ENCODE measurements at regions of chr11 and their contacts with region 1.

Region 1: DNA sequence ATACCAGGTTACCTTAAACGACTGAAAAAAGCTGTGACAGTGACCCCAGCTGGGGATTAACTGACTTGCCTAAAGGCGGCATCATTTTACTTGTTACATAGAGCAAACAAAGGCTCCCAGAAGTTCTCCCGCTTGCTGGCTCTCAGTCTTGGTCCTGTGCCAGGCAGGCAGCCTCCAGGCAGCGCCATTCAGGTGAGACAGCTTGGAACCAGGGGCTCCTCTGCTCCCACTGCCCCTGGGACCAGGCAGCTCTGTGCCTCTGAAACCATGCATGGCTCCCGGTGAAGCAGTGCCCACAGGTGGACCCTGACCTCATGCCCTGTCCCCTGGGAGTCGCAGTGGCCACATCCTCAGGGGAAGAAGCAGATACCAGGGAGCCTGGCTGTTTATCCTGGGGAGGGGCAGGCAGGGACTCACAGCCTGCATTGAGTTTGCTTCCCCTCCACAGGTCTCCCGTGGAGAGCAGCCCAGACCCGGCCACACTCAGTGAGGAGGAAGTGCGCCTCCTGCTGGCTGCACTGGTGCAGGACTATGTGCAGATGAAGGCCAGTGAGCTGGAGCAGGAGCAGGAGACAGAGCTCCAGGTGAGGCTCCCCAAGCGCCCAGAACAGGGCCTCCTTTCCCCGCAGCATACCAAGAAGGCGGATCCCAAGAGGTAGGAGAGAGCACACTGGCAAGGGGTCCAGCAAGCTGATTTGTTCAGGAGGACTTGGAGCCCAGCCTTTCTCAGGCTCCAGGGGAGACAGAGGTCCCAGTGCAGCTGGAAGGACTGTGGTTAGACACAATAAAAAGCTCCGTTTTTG is 15.6 kb upstream of the CYP2R1 start:
- DNase-seq: peak; percentile 27
- H3K4me3 ChIP-seq: no peak overlapping the region
- H3K27ac ChIP-seq: no peak overlapping the region
- H3K4me1 ChIP-seq: no peaks in the 10 kb centered on the region
- H3K27me3 ChIP-seq: no peaks in the 10 kb centered on the region
- CTCF ChIP-seq: peak; percentile 61 to 75

Region 2: GRCh38 chr11:14519917-14520746 is 387.5 kb before region 1 on chr11 and contains the start of gene PSMA1:
- CTCF ChIA-PET with region 1: no interaction called
- dilution Hi-C with region 1: no loop called
- in situ Hi-C with region 1: loop called in 1 of 2 experiments (anchors 10 kb)
- intact Hi-C with region 1: no loop called
- DNase-seq: peak; percentile 96
- H3K4me3 ChIP-seq: peak within 1 kb of the TSS; percentile 72 to 98 (median 93)
- H3K27ac ChIP-seq: peak within 1 kb of the TSS; percentile 97
- H3K4me1 ChIP-seq: peaks cover 5% of the 10 kb centered on the region
- H3K27me3 ChIP-seq: no peaks in the 10 kb centered on the region
- CTCF ChIP-seq: peak in 1 of 2 donors; percentile 20
- total RNA-seq, gene PSMA1: 107 to 154 TPM

Region 3: DNA sequence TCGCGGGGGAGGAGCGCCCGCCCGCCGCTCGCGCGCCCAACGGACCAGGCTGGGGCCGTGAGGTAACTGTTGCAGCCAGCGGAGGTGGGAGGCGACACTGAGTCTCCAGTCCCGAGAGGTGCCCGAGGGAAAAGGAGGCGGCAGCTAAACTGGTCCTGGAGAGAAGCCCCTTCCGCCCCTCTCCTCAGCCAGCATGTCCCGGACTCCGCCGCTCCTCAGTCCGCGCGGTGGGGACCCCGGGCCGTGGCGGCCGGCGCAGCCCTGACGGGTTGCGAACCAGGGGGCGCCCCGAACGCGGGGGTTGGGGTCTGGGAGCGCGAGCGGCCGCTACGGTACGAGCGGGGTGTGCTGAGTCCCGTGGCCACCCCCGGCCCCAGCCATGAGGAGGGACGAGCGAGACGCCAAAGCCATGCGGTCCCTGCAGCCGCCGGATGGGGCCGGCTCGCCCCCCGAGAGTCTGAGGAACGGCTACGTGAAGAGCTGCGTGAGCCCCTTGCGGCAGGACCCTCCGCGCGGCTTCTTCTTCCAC is 263.9 kb before region 1 on chr11 and contains the start of gene PDE3B:
- CTCF ChIA-PET with region 1: interaction called, 10 read pairs
- dilution Hi-C with region 1: no loop called
- in situ Hi-C with region 1: no loop called
- intact Hi-C with region 1: no loop called
- DNase-seq: peak; percentile 3
- H3K4me3 ChIP-seq: peak within 1 kb of the TSS; percentile 47 to 58 (median 54)
- H3K27ac ChIP-seq: no peak within 1 kb of the TSS
- H3K4me1 ChIP-seq: peaks cover 14% of the 10 kb centered on the region
- H3K27me3 ChIP-seq: peaks cover 46% of the 10 kb centered on the region
- CTCF ChIP-seq: no peak
- total RNA-seq, gene PDE3B: not detected

Region 4: GRCh38 chr11:14974515-14975251 is 67.1 kb after region 1 on chr11:
- CTCF ChIA-PET with region 1: no interaction called
- dilution Hi-C with region 1: no loop called
- in situ Hi-C with region 1: no loop called
- intact Hi-C with region 1: loop called (anchors 2 kb)
- DNase-seq: peak; percentile 33
- H3K4me3 ChIP-seq: peak overlapping the region in 2 of 3 experiments; percentile 2 to 5
- H3K27ac ChIP-seq: no peak overlapping the region
- H3K4me1 ChIP-seq: peaks cover 18% of the 10 kb centered on the region
- H3K27me3 ChIP-seq: peaks cover 48% of the 10 kb centered on the region
- CTCF ChIP-seq: peak; percentile 84 to 90

Region 5: DNA sequence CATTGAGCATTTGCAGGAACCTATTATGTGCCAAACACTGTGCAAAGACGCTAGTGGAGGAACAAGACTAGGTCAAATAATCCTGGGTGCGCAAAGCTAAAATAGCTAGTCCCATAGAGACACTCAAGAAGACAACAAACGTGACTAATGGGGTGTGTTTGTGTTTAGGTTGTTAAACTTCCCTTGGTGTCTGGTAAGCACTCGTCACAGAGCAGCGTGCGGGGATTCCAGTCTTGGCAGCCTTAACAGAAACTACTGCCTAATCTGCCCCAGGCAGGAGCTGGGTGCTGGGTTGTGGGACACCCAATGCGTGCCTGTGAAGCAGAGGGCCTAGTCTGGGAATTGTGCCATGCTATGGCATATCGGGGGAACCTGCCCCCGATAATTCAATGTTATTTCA is 155.0 kb after region 1 on chr11:
- CTCF ChIA-PET with region 1: no interaction called
- dilution Hi-C with region 1: no loop called
- in situ Hi-C with region 1: loop called in 1 of 2 experiments (anchors 10 kb)
- intact Hi-C with region 1: no loop called
- DNase-seq: peak; percentile 47
- H3K4me3 ChIP-seq: no peak overlapping the region
- H3K27ac ChIP-seq: no peak overlapping the region
- H3K4me1 ChIP-seq: no peaks in the 10 kb centered on the region
- H3K27me3 ChIP-seq: peaks cover 5% of the 10 kb centered on the region
- CTCF ChIP-seq: no peak

Region 6: DNA sequence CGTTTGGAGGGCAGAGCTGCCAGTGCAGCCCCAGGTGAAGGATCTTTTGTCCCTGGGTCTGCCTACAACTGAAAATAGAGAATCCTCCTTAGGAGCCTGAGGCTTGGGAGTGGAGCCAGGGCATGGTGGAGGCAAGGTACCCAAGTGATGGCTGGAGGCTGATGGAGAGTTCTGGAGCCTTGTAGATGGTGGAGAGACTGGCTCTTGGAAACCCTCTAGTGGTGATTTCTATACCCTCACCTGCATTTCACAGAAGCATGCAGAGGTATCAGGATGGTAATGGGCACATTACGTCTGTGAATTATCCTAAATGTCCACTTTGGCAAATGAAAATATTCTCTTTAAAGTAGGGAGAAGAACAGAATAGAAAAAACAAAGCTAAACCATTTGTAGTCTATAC is 251.5 kb after region 1 on chr11:
- CTCF ChIA-PET with region 1: no interaction called
- dilution Hi-C with region 1: no loop called
- in situ Hi-C with region 1: no loop called
- intact Hi-C with region 1: loop called (anchors 5 kb)
- DNase-seq: peak; percentile 39
- H3K4me3 ChIP-seq: no peak overlapping the region
- H3K27ac ChIP-seq: no peak overlapping the region
- H3K4me1 ChIP-seq: peaks cover 19% of the 10 kb centered on the region
- H3K27me3 ChIP-seq: no peaks in the 10 kb centered on the region
- CTCF ChIP-seq: peak; percentile 76 to 81